Ovary (tissue), 10 donors: ENCODE measurements at regions of chr4 and their contacts with region 1.

Region 1: DNA sequence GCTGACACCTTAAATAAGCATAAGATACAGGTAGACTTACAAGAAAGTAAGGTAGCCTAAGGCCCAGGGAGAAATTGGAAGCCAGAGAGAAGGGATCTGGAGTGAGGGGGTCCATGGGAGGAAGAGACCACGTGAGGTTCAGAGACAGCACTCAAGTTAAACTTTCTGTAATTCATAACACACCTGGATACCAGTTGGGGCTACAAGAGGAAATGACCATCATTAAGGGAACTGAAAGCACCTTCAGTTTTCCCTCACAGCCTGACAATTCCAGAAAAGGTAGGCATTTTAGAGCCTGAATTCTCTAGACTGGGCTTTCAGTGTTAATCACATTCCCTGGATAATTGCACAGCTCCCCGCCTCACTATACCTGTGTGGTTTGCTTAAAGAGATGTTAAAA is 355.5 kb downstream of the FBXW7 start:
- DNase-seq: no peak
- H3K4me3 ChIP-seq: no peak overlapping the region
- H3K27ac ChIP-seq: no peak overlapping the region
- H3K4me1 ChIP-seq: no peaks in the 10 kb centered on the region
- H3K27me3 ChIP-seq: no peaks in the 10 kb centered on the region
- CTCF ChIP-seq: no peak
- EP300 ChIP-seq: no peak
- POLR2A ChIP-seq: no peak

Region 2: GRCh38 chr4:150493851-150494250 is 1686.5 kb before region 1 on chr4:
- intact Hi-C with region 1: no loop called
- DNase-seq: no peak
- H3K4me3 ChIP-seq: no peak overlapping the region
- H3K27ac ChIP-seq: no peak overlapping the region
- H3K4me1 ChIP-seq: no peaks in the 10 kb centered on the region
- H3K27me3 ChIP-seq: no peaks in the 10 kb centered on the region
- CTCF ChIP-seq: no peak
- EP300 ChIP-seq: no peak
- POLR2A ChIP-seq: no peak

Region 3: GRCh38 chr4:151879705-151880445 is 300.5 kb before region 1 on chr4:
- intact Hi-C with region 1: loop called in 1 of 4 experiments (anchors 1 kb)
- DNase-seq: no peak
- H3K4me3 ChIP-seq: no peak overlapping the region
- H3K27ac ChIP-seq: no peak overlapping the region
- H3K4me1 ChIP-seq: no peaks in the 10 kb centered on the region
- H3K27me3 ChIP-seq: no peaks in the 10 kb centered on the region
- CTCF ChIP-seq: no peak
- EP300 ChIP-seq: no peak
- POLR2A ChIP-seq: no peak

Region 4: DNA sequence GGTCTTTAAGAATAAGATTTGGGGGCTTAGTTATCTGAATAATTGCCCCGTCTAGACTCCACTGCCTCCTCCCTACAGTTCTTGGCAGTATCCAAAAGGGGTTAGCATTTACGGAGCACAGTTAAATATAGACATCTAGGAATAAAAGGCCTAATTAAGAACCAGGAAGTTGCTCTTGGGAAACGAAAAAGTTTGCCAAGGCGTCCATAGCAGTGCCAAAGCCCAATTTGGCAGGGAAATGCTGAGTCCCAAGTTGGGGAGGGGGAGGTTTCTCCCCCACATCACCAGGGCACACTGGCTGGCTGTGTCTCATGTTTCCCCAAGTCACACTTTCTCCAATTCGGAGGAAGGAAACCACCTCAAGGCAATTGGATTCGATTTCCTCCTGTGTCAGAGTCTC is 16.8 kb after region 1 on chr4:
- intact Hi-C with region 1: no loop called
- DNase-seq: no peak
- H3K4me3 ChIP-seq: no peak overlapping the region
- H3K27ac ChIP-seq: no peak overlapping the region
- H3K4me1 ChIP-seq: no peaks in the 10 kb centered on the region
- H3K27me3 ChIP-seq: no peaks in the 10 kb centered on the region
- CTCF ChIP-seq: no peak
- EP300 ChIP-seq: no peak
- POLR2A ChIP-seq: no peak